Thyroid gland (tissue), 4 donors: ENCODE measurements at regions of chr7 and their contacts with region 1.

Region 1: GRCh38 chr7:73612598-73613269 is 11.6 kb downstream of the MLXIPL start:
- DNase-seq: peak in 1 of 2 donors; percentile 15
- H3K4me3 ChIP-seq: no peak overlapping the region
- H3K27ac ChIP-seq: no peak overlapping the region
- H3K4me1 ChIP-seq: no peaks in the 10 kb centered on the region
- H3K27me3 ChIP-seq: no peaks in the 10 kb centered on the region
- CTCF ChIP-seq: no peak
- POLR2A ChIP-seq: no peak

Region 2: GRCh38 chr7:73678862-73679261 is 66.1 kb after region 1 on chr7:
- intact Hi-C with region 1: loop called (anchors 10 kb)
- DNase-seq: peak; percentile 73 to 77
- H3K4me3 ChIP-seq: no peak overlapping the region
- H3K27ac ChIP-seq: peak overlapping the region; percentile 60 to 78 (median 76)
- H3K4me1 ChIP-seq: peaks cover 34 to 43% of the 10 kb centered on the region in 2 donors
- H3K27me3 ChIP-seq: no peaks in the 10 kb centered on the region
- CTCF ChIP-seq: no peak
- POLR2A ChIP-seq: peak in 1 of 2 donors; percentile 25

Region 3: DNA sequence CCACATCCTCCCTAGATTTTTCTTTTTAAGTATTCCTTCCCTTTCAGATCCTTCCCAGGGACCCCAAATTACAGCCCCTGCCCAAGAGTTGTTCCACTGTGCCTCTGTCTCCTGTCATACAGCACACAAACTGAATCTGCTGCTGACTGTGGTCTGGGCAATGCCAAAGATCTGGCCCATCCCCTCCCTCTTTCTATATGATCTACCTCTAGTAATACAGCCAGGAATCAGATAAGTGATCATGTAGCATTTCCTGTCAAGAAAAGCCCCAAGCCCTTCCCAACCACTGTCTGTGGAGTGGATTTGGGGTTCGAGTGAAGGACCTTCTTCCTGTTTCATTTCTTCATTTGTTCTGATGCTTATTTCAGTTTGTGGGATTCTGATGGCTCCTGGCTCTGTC is 100.0 kb after region 1 on chr7:
- intact Hi-C with region 1: loop called (anchors 5 kb)
- DNase-seq: no peak
- H3K4me3 ChIP-seq: no peak overlapping the region
- H3K27ac ChIP-seq: no peak overlapping the region
- H3K4me1 ChIP-seq: peaks cover 0 to 1% of the 10 kb centered on the region in 2 donors
- H3K27me3 ChIP-seq: no peaks in the 10 kb centered on the region
- CTCF ChIP-seq: no peak
- POLR2A ChIP-seq: no peak